CD8-positive, alpha-beta T cell (primary cell): ENCODE measurements at regions of chr1 and their contacts with region 1.

Region 1: DNA sequence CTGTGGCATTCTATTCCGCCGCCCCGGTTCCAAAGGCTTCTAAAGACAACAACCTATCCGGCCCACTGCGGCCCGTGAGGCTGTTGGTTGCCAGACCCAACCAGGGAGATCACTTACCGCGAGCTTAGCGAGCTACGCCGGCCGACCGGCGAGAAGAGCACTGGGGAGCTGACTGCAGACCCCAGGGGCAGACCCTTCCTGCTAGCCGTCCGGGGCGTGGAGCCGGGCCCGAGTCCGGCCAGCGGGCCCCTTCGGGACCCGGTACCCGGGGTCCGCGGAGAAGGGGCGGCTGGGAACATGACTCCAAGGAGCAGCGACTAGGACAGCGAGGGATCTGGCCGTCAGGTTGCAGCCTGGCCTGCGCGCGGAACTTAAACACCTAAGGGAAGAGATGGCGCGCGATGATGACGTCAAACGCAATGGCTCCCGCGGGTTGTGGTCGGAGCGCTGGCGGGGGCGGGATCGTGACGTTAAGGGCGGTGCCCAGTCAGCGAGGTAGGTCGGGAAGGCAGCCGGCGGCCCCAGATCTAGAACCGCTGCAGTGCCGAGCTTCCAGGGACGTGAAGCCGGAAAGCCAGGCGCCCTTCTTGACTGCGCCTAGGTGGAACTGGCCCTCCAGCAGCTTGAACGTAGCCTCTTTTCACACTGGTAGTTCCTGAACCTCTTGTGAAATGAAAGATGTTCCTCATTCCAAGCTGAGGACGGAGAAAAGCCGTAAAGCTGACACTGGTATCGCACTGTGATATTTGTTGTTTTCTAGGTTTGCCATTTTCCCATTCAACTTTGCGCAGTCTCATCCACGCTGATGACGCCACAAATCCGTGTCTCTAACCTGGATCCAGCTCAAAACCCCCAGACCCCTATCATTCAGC is at the start of gene NUP133:
- DNase-seq: peak; percentile 96 to 100 (median 99)
- ATAC-seq: peak; percentile 94
- H3K4me3 ChIP-seq: peak within 1 kb of the TSS; percentile 94 to 99
- H3K4me3 Mint-ChIP-seq: peak within 1 kb of the TSS; percentile 87
- H3K27ac ChIP-seq: peak within 1 kb of the TSS; percentile 93 to 97
- H3K27ac Mint-ChIP-seq: peak within 1 kb of the TSS; percentile 99
- H3K4me1 ChIP-seq: peaks cover 20% of the 10 kb centered on the region
- H3K4me1 Mint-ChIP-seq: peaks cover 29% of the 10 kb centered on the region
- H3K27me3 ChIP-seq: no peaks in the 10 kb centered on the region
- H3K27me3 Mint-ChIP-seq: no peaks in the 10 kb centered on the region
- CTCF ChIP-seq: no peak
- total RNA-seq, gene NUP133: 49.0 to 50.7 TPM

Region 2: DNA sequence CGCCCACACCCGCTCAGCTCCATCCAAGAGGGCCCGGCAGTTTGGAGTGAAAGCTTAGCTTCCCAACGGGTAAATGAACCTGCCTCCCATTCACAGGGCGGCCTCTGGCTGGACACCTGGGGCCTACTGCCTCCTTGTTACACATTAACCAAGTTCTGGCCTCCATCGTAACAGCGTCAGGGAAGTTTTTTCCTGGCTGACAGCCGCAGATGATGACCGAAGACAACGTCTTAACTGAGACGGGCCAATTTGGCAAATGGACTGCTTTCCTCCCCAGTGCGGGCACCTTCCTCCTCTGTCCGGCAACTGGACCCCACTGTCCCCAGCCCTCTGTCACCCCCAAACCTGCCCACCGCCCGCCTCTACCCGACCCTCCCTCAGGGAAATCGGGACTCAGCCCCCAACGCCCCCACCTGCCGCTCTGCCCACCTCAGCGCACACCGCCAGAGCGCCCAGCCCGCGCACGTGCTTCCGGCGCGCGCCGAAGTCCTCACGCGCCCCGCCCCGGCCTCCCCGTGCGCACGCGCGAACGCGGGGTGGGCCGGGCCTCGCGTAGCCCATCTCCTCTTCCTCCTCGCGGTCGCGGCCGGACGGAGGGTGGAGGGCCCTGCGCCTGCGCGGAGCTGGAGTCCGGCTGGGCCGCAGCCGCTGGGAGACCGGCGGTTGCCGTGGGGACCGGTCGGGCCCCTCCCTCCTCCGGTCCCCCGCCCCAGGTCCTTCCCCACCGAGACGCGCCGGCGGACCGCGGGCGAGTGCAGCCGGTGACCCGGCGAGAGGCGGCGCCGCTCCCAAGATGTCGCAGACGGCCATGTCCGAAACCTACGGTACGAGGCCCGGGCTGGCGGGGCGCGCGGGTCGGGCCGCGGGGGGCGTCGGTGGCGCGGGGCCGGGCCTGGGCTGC is 237.4 kb before region 1 on chr1 and contains the start of gene RAB4A:
- CTCF ChIA-PET with region 1: no interaction called
- POLR2A ChIA-PET with region 1: no interaction called
- intact Hi-C with region 1: loop called (anchors 1 kb)
- DNase-seq: peak; percentile 44 to 90 (median 71)
- ATAC-seq: peak; percentile 86
- H3K4me3 ChIP-seq: peak within 1 kb of the TSS; percentile 70 to 84
- H3K4me3 Mint-ChIP-seq: peak within 1 kb of the TSS; percentile 98
- H3K27ac ChIP-seq: peak within 1 kb of the TSS; percentile 45 to 57
- H3K27ac Mint-ChIP-seq: peak within 1 kb of the TSS; percentile 83
- H3K4me1 ChIP-seq: peaks cover 31% of the 10 kb centered on the region
- H3K4me1 Mint-ChIP-seq: peaks cover 37% of the 10 kb centered on the region
- H3K27me3 ChIP-seq: no peaks in the 10 kb centered on the region
- H3K27me3 Mint-ChIP-seq: no peaks in the 10 kb centered on the region
- CTCF ChIP-seq: no peak
- total RNA-seq, gene RAB4A: 26.7 to 29.7 TPM

Region 3: GRCh38 chr1:229310833-229311232 is 197.4 kb before region 1 on chr1:
- CTCF ChIA-PET with region 1: no interaction called
- POLR2A ChIA-PET with region 1: no interaction called
- intact Hi-C with region 1: no loop called
- DNase-seq: no peak
- ATAC-seq: no peak
- H3K4me3 ChIP-seq: no peak overlapping the region
- H3K4me3 Mint-ChIP-seq: no peak overlapping the region
- H3K27ac ChIP-seq: no peak overlapping the region
- H3K27ac Mint-ChIP-seq: no peak overlapping the region
- H3K4me1 ChIP-seq: no peaks in the 10 kb centered on the region
- H3K4me1 Mint-ChIP-seq: no peaks in the 10 kb centered on the region
- H3K27me3 ChIP-seq: no peaks in the 10 kb centered on the region
- H3K27me3 Mint-ChIP-seq: no peaks in the 10 kb centered on the region
- CTCF ChIP-seq: no peak

Region 4: DNA sequence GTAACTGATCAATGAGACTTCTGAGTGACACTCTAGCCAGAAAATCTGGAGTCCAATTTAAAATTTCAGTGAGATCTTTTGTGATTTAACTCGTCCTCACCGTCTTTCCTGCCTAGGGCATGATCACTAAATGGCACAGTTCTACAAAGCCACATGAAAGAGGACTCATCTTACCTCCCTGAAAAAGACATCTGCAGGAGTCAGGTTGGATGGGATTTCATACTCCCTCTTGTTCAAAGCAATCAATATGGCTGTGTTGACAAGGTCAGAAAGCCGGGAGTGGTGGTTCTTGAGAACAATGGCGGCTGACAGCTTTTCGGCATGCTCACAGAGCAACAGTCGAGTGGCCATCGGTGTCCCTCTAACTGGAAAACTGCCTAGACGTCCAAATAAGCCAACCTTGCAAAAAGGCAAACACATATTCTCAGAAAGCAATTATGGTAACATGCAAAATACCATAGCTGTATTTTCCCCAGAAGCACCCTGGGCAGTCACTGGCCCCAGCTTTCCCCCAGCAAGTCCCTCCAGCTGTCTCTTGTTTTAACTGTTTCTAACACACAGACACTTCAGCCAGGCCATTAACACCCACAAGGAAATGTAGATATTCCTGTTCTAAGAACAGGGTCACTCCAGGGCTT is 37.7 kb before region 1 on chr1:
- CTCF ChIA-PET with region 1: no interaction called
- POLR2A ChIA-PET with region 1: no interaction called
- intact Hi-C with region 1: no loop called
- DNase-seq: no peak
- ATAC-seq: no peak
- H3K4me3 ChIP-seq: no peak overlapping the region
- H3K4me3 Mint-ChIP-seq: no peak overlapping the region
- H3K27ac ChIP-seq: no peak overlapping the region
- H3K27ac Mint-ChIP-seq: no peak overlapping the region
- H3K4me1 ChIP-seq: no peaks in the 10 kb centered on the region
- H3K4me1 Mint-ChIP-seq: no peaks in the 10 kb centered on the region
- H3K27me3 ChIP-seq: no peaks in the 10 kb centered on the region
- H3K27me3 Mint-ChIP-seq: no peaks in the 10 kb centered on the region
- CTCF ChIP-seq: no peak

Region 5: DNA sequence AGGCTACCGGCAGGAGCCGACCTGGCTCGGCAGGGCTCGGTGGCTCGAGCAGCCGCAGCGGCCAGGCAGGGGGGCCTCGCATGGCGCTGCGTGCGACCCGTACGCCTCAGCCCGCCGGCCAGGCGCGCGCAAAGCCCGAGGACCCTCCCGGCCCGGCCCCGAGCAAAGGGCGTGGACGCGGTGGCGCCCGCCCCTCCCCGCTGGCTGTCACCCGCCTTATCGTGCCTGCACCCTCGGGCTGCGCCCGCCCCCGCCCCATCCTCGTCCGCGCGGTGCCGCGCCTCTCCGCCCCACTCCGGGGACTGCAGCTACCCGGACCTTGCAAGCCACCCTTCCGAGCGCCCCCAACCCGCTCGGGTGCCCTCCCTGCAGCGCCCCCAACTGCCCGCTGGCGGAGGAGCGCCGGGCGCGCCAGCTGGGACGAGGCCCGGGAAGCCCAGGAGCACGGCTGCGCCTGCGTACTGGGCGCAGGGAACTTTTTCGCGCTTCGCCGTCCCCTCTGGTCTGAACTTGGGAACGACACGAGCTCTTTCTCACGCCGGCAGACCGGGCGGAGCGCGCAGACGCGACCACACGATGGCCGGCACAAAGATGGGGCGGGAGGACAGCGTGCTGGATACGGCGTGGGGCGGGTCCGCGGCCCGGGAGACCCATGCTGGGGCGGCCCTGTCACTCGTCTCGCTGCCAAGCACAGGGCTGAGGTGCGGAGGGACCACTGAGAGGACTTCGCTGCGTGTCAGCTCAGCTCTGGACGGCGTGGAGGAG is 50.6 kb after region 1 on chr1 and contains the start of gene ABCB10:
- CTCF ChIA-PET with region 1: interaction called, 3 read pairs
- POLR2A ChIA-PET with region 1: interaction called, 19 read pairs
- intact Hi-C with region 1: loop called (anchors 1 to 2 kb)
- DNase-seq: peak; percentile 56 to 93 (median 81)
- ATAC-seq: peak; percentile 81
- H3K4me3 ChIP-seq: peak within 1 kb of the TSS; percentile 74 to 82
- H3K4me3 Mint-ChIP-seq: peak within 1 kb of the TSS; percentile 95
- H3K27ac ChIP-seq: peak within 1 kb of the TSS; percentile 52 to 70
- H3K27ac Mint-ChIP-seq: peak within 1 kb of the TSS; percentile 90
- H3K4me1 ChIP-seq: peaks cover 18% of the 10 kb centered on the region
- H3K4me1 Mint-ChIP-seq: peaks cover 37% of the 10 kb centered on the region
- H3K27me3 ChIP-seq: no peaks in the 10 kb centered on the region
- H3K27me3 Mint-ChIP-seq: no peaks in the 10 kb centered on the region
- CTCF ChIP-seq: peak; percentile 30
- total RNA-seq, gene ABCB10: 6.1 to 7.6 TPM